HCT116 (cell line): ENCODE measurements at regions of chr7 and their contacts with region 1.

Region 1: DNA sequence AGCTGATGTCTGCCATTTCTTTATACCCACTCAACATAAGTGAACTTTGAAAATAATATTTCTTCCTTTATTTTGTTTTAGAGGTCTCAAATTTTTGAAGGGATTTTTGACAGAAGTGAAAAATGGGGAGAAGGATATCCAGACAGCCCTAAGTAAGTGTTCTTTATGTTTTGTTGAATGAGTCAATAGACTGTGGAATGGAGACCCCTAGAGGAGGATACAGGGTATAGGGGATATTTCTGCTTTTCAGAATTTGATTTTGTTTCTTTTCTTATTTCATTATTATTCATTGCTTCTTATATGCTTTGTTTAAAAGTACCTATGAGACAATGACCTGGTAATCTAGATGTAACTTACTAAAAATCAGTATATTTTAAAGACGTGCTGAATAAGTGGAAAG is 34.4 kb downstream of the PLEKHA8 start:
- DNase-seq: peak; percentile 13
- ATAC-seq: peak; percentile 79
- H3K4me3 ChIP-seq: no peak overlapping the region
- H3K27ac ChIP-seq: no peak overlapping the region
- H3K4me1 ChIP-seq: no peaks in the 10 kb centered on the region
- H3K27me3 ChIP-seq: no peaks in the 10 kb centered on the region
- CTCF ChIP-seq: peak; percentile 62 to 80 (median 68); a peak in 5 of 6 replicates
- POLR2A ChIP-seq: no peak
- RAD21 ChIP-seq: peak; percentile 76

Region 2: DNA sequence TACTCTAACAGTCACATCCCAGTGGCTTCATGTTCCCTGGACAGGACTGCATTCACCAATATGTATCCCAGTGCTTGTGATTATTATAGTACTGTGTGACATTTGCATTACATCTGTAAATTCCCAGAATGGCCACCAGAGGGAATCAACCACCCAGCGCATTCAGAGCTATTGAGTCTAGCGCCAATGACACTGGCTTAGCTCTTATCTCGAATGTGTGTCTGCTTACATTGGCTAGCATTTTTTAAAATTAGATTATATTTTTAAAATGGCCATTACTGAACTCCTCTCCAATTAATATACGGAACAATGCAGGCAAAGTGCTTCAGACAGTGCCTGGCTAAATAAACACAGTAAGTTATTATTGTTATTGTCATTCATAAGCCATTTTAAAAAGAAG is 1140.8 kb before region 1 on chr7:
- CTCF ChIA-PET with region 1: interaction called, 8 read pairs
- POLR2A ChIA-PET with region 1: no interaction called
- RAD21 ChIA-PET with region 1: no interaction called
- intact Hi-C with region 1: loop called (anchors 5 kb)
- DNase-seq: peak; percentile 67
- ATAC-seq: peak; percentile 96
- H3K4me3 ChIP-seq: no peak overlapping the region
- H3K27ac ChIP-seq: no peak overlapping the region
- H3K4me1 ChIP-seq: peaks cover 5 to 10% of the 10 kb centered on the region in 2 experiments; a peak in 3 of 4 replicates
- H3K27me3 ChIP-seq: no peaks in the 10 kb centered on the region
- CTCF ChIP-seq: peak; percentile 79 to 83 (median 82)
- POLR2A ChIP-seq: no peak
- RAD21 ChIP-seq: peak; percentile 75

Region 3: DNA sequence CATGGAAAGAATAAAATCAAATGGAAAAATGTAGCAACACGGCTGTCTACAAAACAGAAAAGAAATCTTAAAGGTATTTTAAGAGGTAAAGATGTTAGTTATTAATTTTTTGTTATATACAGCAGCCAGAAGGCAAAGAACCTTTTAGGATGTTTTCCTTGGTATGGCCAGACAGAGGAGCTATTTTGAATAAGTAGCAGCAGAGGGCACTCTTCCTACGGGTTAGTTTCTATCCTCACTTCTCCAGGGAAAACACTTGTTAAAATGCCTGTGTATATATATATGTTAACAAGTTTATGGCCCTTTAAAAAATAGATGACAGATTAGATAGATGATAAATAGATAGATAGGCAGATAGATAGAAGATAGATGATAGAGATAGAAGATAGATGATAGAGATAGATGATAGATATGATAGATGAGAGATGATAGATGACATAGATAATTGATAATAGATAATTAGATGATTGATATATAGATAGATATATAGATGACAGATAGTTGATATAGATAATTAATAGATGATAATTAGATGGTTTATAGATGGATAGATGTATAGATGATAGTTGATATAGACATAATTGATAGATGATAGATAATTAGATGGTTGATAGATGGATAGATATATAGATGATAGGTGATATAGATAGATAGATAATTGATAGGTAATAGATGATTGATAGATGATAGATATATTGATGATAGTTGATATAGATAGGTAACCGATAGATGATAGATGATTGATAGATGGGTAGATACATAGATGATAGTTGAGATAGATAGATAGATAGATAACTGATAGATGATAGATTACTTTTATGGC is 314.1 kb before region 1 on chr7:
- CTCF ChIA-PET with region 1: interaction called, 12 read pairs
- POLR2A ChIA-PET with region 1: no interaction called
- RAD21 ChIA-PET with region 1: no interaction called
- intact Hi-C with region 1: no loop called
- DNase-seq: peak; percentile 35
- ATAC-seq: peak; percentile 91
- H3K4me3 ChIP-seq: no peak overlapping the region
- H3K27ac ChIP-seq: no peak overlapping the region
- H3K4me1 ChIP-seq: no peaks in the 10 kb centered on the region
- H3K27me3 ChIP-seq: no peaks in the 10 kb centered on the region
- CTCF ChIP-seq: peak; percentile 56 to 79 (median 62)
- POLR2A ChIP-seq: no peak
- RAD21 ChIP-seq: peak; percentile 74

Region 4: GRCh38 chr7:29921404-29922010 is 141.1 kb before region 1 on chr7:
- CTCF ChIA-PET with region 1: interaction called, 10 read pairs
- POLR2A ChIA-PET with region 1: no interaction called
- RAD21 ChIA-PET with region 1: no interaction called
- intact Hi-C with region 1: no loop called
- DNase-seq: peak; percentile 46
- ATAC-seq: peak; percentile 93
- H3K4me3 ChIP-seq: no peak overlapping the region
- H3K27ac ChIP-seq: no peak overlapping the region
- H3K4me1 ChIP-seq: no peaks in the 10 kb centered on the region
- H3K27me3 ChIP-seq: no peaks in the 10 kb centered on the region
- CTCF ChIP-seq: peak; percentile 77 to 96 (median 88)
- POLR2A ChIP-seq: no peak
- RAD21 ChIP-seq: peak; percentile 86

Region 5: GRCh38 chr7:30074422-30075030 is 11.9 kb after region 1 on chr7:
- CTCF ChIA-PET with region 1: interaction called, 26 read pairs
- POLR2A ChIA-PET with region 1: no interaction called
- RAD21 ChIA-PET with region 1: no interaction called
- intact Hi-C with region 1: no loop called
- DNase-seq: peak; percentile 38
- ATAC-seq: peak; percentile 68
- H3K4me3 ChIP-seq: no peak overlapping the region
- H3K27ac ChIP-seq: no peak overlapping the region
- H3K4me1 ChIP-seq: no peaks in the 10 kb centered on the region
- H3K27me3 ChIP-seq: no peaks in the 10 kb centered on the region
- CTCF ChIP-seq: peak; percentile 45 to 68 (median 46); a peak in 5 of 6 replicates
- POLR2A ChIP-seq: no peak
- RAD21 ChIP-seq: peak; percentile 62

Region 6: DNA sequence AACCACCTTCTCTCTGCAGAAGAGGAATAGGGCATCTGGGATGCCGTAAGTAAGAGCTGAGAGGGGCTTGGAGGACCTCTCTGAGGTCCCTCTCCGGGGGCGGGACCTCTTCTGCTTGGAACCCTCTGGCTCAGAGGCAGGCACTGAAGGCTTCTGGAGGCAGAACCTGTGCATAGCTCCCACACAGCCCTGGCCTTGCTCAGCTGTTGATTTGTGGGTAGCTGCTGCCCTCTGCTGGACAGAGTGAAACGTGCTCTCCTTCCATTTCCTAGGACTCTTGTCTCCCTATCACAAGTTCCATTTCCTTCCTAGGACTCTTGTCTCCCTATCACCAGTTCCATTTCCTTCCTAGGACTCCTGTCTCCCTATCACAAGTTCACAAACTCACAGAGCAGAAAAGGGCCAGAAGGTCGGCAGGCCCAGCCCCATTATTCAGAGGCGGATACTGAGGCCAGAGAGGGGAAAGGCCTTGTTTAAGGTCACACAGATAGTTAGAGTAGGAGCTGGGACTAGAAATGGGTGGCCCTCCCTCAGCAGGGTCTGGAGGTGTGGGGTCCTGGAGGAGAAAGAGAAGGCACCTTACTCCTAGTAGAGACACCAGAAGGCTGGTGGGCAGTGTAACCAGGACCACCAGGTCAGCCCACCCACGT is 501.8 kb after region 1 on chr7:
- CTCF ChIA-PET with region 1: no interaction called
- POLR2A ChIA-PET with region 1: no interaction called
- RAD21 ChIA-PET with region 1: no interaction called
- intact Hi-C with region 1: loop called (anchors 10 kb)
- DNase-seq: peak; percentile 78
- ATAC-seq: peak; percentile 92
- H3K4me3 ChIP-seq: no peak overlapping the region
- H3K27ac ChIP-seq: no peak overlapping the region
- H3K4me1 ChIP-seq: peaks cover 15 to 24% of the 10 kb centered on the region in 2 experiments
- H3K27me3 ChIP-seq: no peaks in the 10 kb centered on the region
- CTCF ChIP-seq: peak; percentile 82 to 87 (median 83)
- POLR2A ChIP-seq: no peak
- RAD21 ChIP-seq: peak; percentile 96